ENCODE measurements at regions of chr20 and their contacts with region 1.

Region 1: DNA sequence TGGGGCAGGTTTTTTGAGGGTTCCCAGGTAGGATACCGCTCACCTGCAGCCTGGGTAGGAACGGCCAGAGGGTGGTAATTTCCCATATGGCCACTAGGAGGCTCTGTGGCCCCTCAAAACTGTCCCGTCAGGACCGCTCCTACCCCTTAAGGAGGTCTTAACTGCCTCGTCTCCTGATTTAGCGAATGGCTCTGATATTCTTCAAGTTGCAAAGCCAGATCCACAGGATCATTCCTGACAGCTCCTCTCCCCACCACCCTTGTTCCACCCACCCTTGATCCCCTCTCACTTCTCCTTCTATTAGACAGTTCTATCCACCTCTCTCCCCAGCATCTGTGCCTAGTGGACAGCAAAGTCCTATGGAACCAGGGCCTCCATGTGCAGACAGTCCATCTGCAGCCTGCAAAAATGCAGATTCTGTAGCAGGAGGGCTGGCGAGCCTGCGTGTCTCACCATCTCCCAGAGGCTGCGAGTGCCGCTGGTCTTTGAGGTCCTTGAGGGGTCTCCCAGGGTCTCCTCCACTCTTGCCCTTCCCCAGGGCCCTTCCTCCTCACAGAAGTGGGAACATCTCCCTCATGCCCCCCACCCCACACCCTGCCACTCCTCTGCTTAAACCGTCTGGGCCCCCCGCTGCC is 34.3 kb upstream of the ZBP1 start:
- DNase-seq: peak; percentile 55
- ATAC-seq: peak; percentile 96
- H3K4me3 Mint-ChIP-seq: no peak overlapping the region
- H3K27ac Mint-ChIP-seq: peak overlapping the region; percentile 52
- H3K4me1 Mint-ChIP-seq: peaks cover 29% of the 10 kb centered on the region
- H3K27me3 Mint-ChIP-seq: no peaks in the 10 kb centered on the region
- CTCF ChIP-seq: peak; percentile 93

Region 2: DNA sequence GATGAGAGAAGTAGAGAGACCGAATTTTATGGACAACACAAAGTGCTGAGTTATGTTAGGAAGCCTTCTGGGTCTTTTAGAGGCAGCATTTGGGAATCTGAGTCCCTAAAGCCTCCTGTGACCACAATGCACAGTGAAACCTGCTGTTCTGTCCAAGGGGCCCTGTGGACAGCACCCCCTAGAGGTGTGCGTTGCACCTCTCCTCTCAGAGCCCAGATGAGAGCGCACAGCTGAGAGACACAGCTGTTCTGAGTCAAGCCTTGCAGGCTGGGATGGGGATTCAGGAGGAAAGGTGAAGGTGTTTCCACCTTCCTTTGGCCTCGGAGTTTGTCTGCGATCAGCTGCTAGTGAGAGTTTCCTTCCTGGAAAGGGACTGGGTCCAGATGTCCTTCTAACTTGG is 80.6 kb before region 1 on chr20:
- CTCF ChIA-PET with region 1: no interaction called
- POLR2A ChIA-PET with region 1: no interaction called
- intact Hi-C with region 1: no loop called
- DNase-seq: no peak
- ATAC-seq: no peak
- H3K4me3 Mint-ChIP-seq: no peak overlapping the region
- H3K27ac Mint-ChIP-seq: no peak overlapping the region
- H3K4me1 Mint-ChIP-seq: no peaks in the 10 kb centered on the region
- H3K27me3 Mint-ChIP-seq: peaks cover 21% of the 10 kb centered on the region
- CTCF ChIP-seq: no peak

Region 3: DNA sequence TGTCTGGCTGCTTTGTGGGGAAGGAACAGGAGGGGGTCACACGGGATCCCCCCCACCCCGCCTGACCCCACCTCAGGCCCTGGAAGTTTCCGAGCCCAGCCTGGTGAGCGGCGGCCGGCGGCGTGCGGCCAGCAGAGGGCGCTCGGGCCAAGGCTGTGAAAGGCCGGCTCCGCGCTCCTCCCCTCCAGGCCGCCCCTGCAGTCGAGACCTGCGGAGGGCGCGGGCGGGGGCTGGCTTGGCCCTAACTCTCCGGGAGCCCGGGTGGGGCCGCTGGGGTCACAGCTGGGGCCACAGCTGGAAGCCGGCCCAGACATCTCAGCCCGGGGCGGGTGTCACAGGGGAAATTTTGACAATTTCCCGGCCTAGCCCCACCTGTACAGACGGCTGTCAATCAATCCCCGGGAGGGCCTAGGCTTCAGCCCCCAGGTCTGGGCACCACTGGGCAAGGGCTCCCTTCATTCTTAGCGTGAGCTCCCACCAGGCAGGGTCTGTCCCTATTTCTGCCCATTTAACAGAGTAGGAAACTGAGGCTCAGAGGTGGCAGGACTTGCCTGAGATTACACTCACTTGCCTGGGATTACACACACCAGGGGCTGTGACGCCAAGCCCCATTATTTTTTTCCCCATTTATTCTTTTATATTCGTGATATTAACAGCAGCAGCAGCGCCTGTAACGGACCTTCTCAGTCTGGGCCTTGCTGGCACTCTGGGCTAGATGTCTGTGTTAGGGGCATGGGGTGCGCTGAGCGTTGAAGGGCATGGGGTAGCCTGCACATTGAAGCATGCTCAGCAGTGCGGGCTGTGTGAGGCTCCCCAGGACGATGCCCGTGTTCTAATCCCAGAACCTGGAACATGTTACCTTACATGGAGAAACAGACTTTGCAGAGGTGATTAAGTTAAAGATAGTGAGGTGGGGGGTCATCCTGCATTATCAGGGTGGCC is 57.2 kb before region 1 on chr20:
- CTCF ChIA-PET with region 1: interaction called, 12 read pairs
- POLR2A ChIA-PET with region 1: no interaction called
- intact Hi-C with region 1: loop called (anchors 1 kb)
- DNase-seq: peak; percentile 82
- ATAC-seq: peak; percentile 85
- H3K4me3 Mint-ChIP-seq: peak overlapping the region; percentile 42
- H3K27ac Mint-ChIP-seq: no peak overlapping the region
- H3K4me1 Mint-ChIP-seq: peaks cover 25% of the 10 kb centered on the region
- H3K27me3 Mint-ChIP-seq: peaks cover 18% of the 10 kb centered on the region
- CTCF ChIP-seq: peak; percentile 35

Region 4: DNA sequence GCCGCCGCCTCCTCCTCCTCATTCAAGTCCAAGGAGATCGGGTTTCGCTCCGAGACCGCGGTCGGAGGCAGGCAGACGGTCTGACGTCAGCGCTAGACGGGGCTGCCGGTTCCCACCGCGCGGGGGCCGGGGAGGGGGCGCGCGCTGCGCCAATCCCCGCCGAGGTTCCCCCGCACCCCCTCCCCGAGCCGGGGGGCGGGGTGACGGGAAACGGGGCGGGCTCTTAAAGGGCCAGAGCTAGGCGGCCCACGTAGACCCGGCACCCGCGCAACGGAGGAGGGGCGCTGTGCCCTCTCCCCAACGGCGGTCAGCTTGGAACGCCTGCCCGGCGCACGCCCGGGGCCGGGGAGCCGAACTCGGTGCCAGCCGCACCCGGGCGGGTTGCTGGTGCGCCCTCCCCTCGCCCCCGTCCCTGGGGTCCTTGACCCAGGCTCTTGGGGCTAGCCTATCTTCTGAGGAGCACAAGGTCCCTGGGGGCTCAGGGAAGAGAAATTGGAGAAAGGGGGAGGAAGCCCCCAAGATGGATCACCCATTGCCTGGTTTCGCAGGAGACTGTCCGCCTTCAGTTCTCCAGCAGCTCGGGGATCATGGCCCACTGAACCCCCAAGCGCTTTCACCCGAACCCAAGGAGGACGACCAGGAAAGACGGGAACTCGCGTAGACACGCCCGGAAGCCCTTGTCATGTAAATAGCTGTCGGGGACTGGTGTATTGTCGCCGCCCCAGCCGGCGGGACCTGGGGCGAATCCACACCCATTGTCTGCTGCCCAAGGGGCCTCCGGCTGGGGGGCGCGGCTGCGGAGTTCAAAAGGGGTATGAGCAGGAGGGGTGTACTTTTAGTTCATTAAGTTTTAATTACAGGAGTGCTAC is 55.7 kb after region 1 on chr20 and contains the start of gene PMEPA1:
- CTCF ChIA-PET with region 1: interaction called, 11 read pairs
- POLR2A ChIA-PET with region 1: interaction called, 4 read pairs
- intact Hi-C with region 1: loop called (anchors 2 kb)
- DNase-seq: peak; percentile 95
- ATAC-seq: peak; percentile 86
- H3K4me3 Mint-ChIP-seq: peak within 1 kb of the TSS; percentile 99
- H3K27ac Mint-ChIP-seq: peak within 1 kb of the TSS; percentile 92
- H3K4me1 Mint-ChIP-seq: peaks cover 59% of the 10 kb centered on the region
- H3K27me3 Mint-ChIP-seq: no peaks in the 10 kb centered on the region
- CTCF ChIP-seq: no peak
- total RNA-seq, gene PMEPA1: 33.1 and 34.8 TPM in 2 replicates

Region 5: GRCh38 chr20:57950764-57951163 is 296.3 kb after region 1 on chr20:
- CTCF ChIA-PET with region 1: no interaction called
- POLR2A ChIA-PET with region 1: no interaction called
- intact Hi-C with region 1: loop called (anchors 1 kb)
- DNase-seq: no peak
- ATAC-seq: no peak
- H3K4me3 Mint-ChIP-seq: no peak overlapping the region
- H3K27ac Mint-ChIP-seq: no peak overlapping the region
- H3K4me1 Mint-ChIP-seq: no peaks in the 10 kb centered on the region
- H3K27me3 Mint-ChIP-seq: peaks cover 2% of the 10 kb centered on the region
- CTCF ChIP-seq: no peak

Region 6: DNA sequence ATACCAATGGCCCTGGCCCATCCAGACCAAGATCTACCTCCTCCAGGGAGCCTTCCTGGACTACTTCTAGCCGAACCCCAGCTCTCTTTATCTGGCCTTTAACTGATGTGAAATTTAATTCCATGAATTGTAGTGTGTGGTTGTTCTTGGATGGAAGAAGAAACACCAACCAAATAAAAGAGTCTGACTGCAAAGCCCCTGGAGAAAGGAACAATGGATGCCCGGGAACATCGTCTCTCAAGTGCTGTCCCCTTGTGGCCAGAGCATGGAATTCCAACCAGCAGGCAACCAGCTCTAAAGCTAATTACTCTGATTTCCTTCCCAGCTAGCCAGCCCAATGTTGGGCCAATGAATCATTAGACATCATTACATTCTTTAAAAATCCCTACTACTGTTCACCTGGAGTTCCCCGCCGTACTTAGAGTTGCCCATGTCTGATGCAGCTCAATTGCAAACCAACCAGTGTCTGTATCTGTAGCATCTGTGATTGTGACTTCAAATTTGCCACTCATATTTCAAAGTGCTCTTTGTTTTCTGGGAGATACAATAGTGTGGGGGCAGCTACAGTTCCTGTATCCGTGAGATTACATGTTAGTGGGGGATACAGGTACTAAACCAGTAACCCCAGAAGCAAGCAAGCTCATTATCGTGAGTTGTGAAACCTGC is 432.8 kb after region 1 on chr20:
- CTCF ChIA-PET with region 1: interaction called, 38 read pairs
- POLR2A ChIA-PET with region 1: interaction called, 3 read pairs
- intact Hi-C with region 1: loop called (anchors 1 kb)
- DNase-seq: no peak
- ATAC-seq: no peak
- H3K4me3 Mint-ChIP-seq: no peak overlapping the region
- H3K27ac Mint-ChIP-seq: no peak overlapping the region
- H3K4me1 Mint-ChIP-seq: no peaks in the 10 kb centered on the region
- H3K27me3 Mint-ChIP-seq: peaks cover 16% of the 10 kb centered on the region
- CTCF ChIP-seq: no peak

Region 7: DNA sequence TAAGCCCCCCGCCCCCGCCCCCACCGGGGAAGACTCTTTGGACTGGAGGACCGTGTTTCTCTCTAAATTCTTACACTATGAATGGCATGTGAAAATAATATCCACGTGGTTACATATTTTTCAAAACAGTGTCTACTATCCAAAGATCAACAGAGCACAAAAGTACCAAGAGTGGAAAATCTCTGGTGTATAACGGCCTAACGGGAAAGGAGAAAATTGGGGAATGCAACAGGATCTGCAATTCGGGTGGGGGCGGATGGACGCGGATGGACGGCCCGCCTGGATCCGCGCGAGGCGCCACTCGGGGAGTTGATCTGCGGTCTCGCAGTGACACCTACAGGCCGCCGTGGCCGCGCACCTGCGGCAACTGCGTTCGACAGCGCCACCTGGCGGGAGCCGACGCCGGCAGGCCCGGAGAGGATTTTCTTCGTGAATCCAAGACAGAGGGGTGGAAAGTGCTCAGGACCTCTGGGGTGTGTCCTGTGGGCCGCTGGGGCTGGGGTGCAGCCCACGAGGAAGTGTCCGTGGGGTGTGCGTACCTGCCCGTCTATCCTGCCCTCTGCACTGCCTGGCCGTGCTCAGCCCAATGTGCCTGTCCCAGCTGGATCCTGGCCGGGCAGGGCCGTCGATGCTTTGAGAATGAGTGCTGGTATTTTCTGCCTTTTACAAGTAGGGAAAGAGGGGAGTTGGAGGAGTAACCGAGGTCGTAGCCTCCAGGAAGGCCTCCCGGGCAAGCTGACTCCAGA is 555.3 kb after region 1 on chr20:
- CTCF ChIA-PET with region 1: interaction called, 3 read pairs
- POLR2A ChIA-PET with region 1: no interaction called
- intact Hi-C with region 1: loop called (anchors 1 kb)
- DNase-seq: peak; percentile 88
- ATAC-seq: peak; percentile 96
- H3K4me3 Mint-ChIP-seq: peak overlapping the region; percentile 30
- H3K27ac Mint-ChIP-seq: no peak overlapping the region
- H3K4me1 Mint-ChIP-seq: peaks cover 4% of the 10 kb centered on the region
- H3K27me3 Mint-ChIP-seq: peaks cover 3% of the 10 kb centered on the region
- CTCF ChIP-seq: peak; percentile 99